ENCODE measurements at regions of chr19 and their contacts with region 1.

Region 1: DNA sequence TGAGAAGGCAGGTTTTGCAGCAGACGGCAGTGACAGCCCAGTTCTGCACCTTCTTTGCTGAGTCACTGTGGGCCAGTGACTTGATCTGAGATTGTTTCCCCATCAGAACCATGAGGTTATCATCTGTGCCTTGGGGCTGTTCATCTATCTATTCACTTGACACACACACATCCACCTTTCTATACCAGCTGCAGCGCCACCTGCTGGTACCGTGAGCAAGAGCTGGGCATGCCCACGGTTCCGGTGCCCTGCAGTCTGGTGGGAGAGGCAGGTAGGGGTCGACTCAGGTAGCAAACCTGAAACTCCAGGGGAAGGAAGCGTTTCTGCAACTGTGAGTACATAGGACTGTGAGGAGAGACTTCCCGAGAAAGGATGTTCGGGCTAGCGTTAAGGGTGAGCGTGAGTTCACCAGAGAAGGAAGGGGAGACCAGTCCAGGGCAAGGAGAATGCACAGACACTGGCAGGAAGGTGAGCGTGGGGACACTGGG is 7.5 kb upstream of the LIN7B start:
- DNase-seq: no peak
- H3K4me3 ChIP-seq: no peak overlapping the region
- H3K27ac ChIP-seq: no peak overlapping the region
- H3K4me1 ChIP-seq: peaks cover 0 to 20% (median 10%) of the 10 kb centered on the region in 4 donors
- H3K27me3 ChIP-seq: no peaks in the 10 kb centered on the region
- CTCF ChIP-seq: peak; percentile 63 to 68

Region 2: GRCh38 chr19:49142866-49143335 is 36.2 kb after region 1 on chr19:
- intact Hi-C with region 1: loop called (anchors 5 kb)
- DNase-seq: peak; percentile 87 to 93
- H3K4me3 ChIP-seq: peak overlapping the region; percentile 46 to 57
- H3K27ac ChIP-seq: no peak overlapping the region
- H3K4me1 ChIP-seq: peaks cover 0 to 26% (median 21%) of the 10 kb centered on the region in 4 donors
- H3K27me3 ChIP-seq: no peaks in the 10 kb centered on the region
- CTCF ChIP-seq: no peak

Measured in tibial artery (tissue), 4 donors.